ENCODE measurements at regions of chr18 and their contacts with region 1.

Region 1: GRCh38 chr18:9217743-9218451 is 81.3 kb downstream of the ANKRD12 start:
- DNase-seq: no peak
- ATAC-seq: no peak
- H3K4me3 ChIP-seq: no peak overlapping the region
- H3K4me3 Mint-ChIP-seq: no peak overlapping the region
- H3K27ac ChIP-seq: no peak overlapping the region
- H3K27ac Mint-ChIP-seq: no peak overlapping the region
- H3K4me1 ChIP-seq: no peaks in the 10 kb centered on the region
- H3K4me1 Mint-ChIP-seq: peaks cover 12% of the 10 kb centered on the region
- H3K27me3 ChIP-seq: no peaks in the 10 kb centered on the region
- H3K27me3 Mint-ChIP-seq: no peaks in the 10 kb centered on the region
- CTCF ChIP-seq: no peak

Region 2: DNA sequence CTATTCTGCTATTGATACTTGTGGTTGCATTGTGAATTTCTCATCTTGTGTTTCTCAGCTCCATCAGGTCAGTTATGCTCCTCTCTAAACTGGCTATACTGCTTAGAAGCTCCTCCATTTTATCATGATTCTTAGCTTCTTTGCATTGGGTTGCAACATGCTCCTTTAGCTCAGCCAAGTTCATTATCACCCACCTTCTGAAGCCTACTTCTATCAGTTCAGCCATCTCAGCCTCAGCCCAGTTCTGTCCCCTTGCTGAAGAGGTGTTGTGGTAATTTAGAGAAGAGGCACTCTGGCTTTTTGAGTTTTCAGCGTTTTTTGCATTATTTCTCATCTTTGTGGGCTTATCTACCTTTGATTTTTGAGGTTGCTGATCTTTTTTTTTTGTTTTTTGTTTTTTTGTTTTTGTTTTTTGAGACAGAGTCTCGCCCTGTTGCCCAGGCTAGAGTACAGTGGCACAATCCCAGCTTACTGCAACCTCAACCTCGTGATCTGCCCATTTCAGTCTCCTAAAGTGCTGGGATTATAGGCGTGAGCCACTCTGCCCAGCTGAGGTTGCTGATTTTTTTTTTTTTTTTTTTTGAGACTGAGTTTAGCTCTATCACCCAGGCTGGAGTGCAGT is 45.3 kb before region 1 on chr18:
- CTCF ChIA-PET with region 1: no interaction called
- POLR2A ChIA-PET with region 1: no interaction called
- intact Hi-C with region 1: loop called in 1 of 2 experiments (anchors 2 kb)
- DNase-seq: no peak
- ATAC-seq: no peak
- H3K4me3 ChIP-seq: no peak overlapping the region
- H3K4me3 Mint-ChIP-seq: peak overlapping the region; percentile 60
- H3K27ac ChIP-seq: no peak overlapping the region
- H3K27ac Mint-ChIP-seq: peak overlapping the region; percentile 48
- H3K4me1 ChIP-seq: peaks cover 44% of the 10 kb centered on the region
- H3K4me1 Mint-ChIP-seq: peaks cover 83% of the 10 kb centered on the region
- H3K27me3 ChIP-seq: no peaks in the 10 kb centered on the region
- H3K27me3 Mint-ChIP-seq: no peaks in the 10 kb centered on the region
- CTCF ChIP-seq: no peak